GM18951 (cell line): ENCODE measurements at regions of chr2 and their contacts with region 1.

Region 1: DNA sequence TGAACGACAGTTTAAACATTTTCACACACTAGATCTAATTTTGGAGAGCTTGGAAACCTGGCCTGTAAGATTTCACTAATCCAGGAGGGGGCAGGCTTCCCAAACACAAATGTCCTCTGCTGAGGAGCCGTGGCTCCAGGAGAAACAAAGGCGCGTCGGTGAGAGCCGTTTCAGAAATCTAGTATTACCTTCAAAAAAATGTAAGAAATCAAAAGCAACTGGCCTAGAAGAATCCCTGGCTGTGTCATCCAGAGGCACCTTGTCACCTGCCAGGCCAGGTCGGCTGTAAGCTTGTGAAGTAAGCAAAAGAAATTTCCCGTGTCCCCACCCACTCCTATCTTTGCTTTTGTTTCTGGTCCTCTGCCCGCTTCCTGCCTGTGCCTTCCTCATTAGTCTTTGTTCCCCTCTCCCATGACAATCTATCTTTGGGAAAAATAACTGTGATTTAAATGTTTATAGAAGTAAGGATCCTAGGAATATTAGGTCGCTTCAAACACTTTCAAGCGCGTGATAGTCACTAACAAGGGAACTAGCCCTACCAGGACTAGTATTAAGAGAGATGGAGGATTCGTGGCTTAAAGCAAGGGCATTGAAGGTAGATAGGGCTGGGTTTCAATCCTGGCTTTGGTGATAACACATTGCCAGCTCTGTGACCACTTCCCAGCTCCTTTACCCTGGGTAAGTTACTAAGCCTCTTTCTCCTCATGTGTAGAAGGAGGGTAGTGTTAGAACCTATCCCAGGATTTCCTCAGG is 99.5 kb upstream of the STK39 start:
- POLR2A ChIP-seq: no peak

Region 2: DNA sequence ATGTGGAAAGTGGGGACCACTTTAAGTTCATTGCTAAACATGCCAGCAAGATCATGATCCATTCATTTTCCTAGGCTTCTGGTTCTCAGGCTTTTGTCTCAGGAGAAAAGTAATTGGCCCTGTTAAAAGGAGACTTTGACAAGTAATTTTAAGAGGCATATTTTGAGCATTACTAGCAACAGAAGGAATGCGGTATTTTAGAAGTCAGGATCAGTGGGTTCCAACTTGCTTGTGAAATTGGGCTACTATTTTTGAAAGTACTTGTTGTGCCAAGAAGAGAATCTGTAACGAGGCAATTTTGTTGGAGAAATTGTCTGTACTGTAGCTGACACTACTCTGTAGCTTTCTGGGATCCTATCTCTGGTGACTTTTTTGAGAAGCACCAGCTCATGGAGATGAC is 168.6 kb after region 1 on chr2:
- in situ Hi-C with region 1: no loop called
- POLR2A ChIP-seq: no peak

Region 3: DNA sequence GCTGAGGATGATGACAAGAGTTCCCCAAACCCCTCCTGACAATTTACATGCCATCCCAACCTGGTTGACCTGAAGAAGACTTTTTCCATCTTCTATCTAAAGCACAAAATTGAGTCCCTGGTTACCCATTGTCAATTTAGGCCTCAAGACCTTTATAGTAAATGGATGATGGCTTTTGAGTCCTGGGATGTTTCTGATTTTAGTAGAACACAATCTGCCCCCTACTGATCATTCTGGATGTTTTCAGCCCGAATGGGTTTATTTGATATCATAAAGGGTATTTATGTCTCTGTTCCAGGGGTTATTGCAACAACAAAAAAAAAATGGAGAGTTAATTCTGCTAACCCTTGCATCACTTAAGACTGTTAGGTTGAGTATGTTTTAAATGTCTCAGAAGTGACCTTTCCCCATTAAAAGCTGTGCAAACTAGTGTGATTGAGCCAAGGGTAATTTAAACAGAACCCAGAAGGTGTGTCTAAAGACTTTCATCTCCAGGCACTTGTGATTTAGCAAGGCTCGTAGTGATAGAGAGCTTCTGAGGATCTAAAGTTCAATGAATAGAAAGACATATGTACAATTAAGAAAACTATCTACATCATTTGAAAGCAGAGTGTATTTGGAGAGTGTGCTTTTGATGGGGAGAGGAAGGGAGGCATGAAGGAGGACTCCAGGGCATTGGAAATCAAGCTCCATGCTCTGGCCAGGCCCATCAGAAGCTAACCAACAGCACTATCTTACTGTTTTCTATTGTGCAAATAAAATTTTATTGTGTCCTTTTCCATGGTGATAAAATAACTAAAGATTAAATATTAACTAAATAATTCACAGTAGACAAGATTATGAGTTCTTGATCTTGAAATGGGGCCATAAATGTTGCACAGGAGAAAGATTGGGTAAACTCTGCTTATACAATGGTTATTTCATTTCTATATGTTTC is 358.9 kb after region 1 on chr2:
- in situ Hi-C with region 1: loop called (anchors 10 kb)
- POLR2A ChIP-seq: no peak

Region 4: GRCh38 chr2:168758970-168759820 is 412.3 kb after region 1 on chr2:
- in situ Hi-C with region 1: loop called (anchors 10 kb)
- POLR2A ChIP-seq: no peak

Region 5: DNA sequence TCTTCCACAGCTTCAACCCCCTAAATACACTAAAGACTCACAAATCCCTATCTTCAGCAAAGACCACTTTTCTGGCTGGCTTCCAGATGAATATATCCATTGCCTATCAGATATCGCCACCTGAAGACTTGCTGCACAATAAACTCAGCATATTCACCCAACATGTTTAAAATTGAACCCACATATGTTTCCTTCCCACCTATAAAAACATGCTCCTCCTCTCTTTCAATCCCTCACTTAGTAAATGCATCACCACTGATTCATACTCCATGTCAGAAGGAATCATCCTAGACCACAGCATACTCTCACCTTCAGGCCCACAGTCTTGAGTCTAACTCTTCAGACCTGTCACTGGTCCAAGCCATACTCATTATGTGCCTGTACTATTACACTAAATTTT is 538.1 kb after region 1 on chr2:
- in situ Hi-C with region 1: no loop called
- POLR2A ChIP-seq: no peak

Region 6: GRCh38 chr2:168912901-168913369 is 566.0 kb after region 1 on chr2:
- in situ Hi-C with region 1: loop called (anchors 10 kb)
- POLR2A ChIP-seq: no peak